Activated CD4-positive, alpha-beta T cell treated with anti-CD3 and anti-CD28 coated beads for 36 hours (primary cell): ENCODE measurements at regions of chr11 and their contacts with region 1.

Region 1: GRCh38 chr11:128522055-128522942 is 65.1 kb downstream of the ETS1 start:
- DNase-seq: peak; percentile 95
- ATAC-seq: peak; percentile 70
- H3K4me3 Mint-ChIP-seq: peak overlapping the region; percentile 96
- H3K27ac Mint-ChIP-seq: peak overlapping the region; percentile 99
- H3K4me1 Mint-ChIP-seq: peaks cover 42% of the 10 kb centered on the region
- H3K27me3 Mint-ChIP-seq: no peaks in the 10 kb centered on the region

Region 2: DNA sequence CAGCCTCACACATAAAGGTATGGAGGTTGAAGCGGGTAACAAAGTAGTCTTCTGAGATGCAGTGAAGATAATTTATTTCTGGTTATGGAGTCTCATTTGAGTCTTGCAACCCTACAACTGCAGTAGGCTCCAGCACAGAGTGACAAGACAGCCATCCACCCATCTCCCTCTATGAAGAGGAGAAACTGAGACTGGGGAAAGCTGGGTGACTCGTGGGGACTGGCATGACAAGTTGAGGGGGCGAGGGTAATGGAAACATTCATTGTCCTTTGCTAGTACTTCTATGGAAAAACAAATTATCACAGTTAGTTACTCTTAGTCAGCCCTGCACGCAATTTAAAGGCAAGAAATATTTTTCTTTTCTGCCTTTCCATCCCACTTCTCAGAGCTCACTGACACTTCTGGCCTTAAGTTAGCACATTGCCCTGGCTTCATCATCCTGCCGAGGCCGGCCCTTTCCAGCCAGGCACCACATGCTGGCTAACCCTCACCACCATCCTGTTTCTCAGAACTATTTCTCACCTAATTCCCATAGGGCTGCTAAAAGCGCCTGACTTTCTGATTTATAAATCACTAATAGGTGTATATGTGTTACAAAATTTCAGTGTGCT is 296.1 kb before region 1 on chr11:
- CTCF ChIA-PET with region 1: no interaction called
- POLR2A ChIA-PET with region 1: no interaction called
- intact Hi-C with region 1: loop called in 1 of 2 experiments (anchors 5 kb)
- DNase-seq: peak; percentile 62
- ATAC-seq: peak; percentile 54
- H3K4me3 Mint-ChIP-seq: no peak overlapping the region
- H3K27ac Mint-ChIP-seq: peak overlapping the region; percentile 55
- H3K4me1 Mint-ChIP-seq: peaks cover 52% of the 10 kb centered on the region
- H3K27me3 Mint-ChIP-seq: no peaks in the 10 kb centered on the region

Region 3: DNA sequence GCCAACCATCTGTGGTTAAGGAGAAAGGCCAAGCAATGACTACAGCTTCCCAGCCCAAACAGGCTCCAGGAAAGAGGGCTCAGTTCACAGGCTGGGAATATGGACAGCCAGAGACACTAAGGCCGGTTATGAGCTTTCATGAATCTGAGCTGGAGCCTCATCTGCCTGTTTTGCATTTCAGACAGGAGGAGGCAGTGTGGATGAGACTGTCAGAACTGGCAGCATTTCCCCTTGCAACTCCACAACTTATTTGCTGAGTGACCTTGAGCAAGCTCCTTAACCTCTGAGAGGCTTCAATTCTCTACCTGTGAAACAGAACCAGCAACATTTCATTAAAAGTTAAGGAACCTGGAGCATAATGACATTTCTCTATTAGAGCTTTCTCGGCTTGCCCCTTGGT is 198.9 kb before region 1 on chr11:
- CTCF ChIA-PET with region 1: interaction called, 3 read pairs
- POLR2A ChIA-PET with region 1: interaction called, 5 read pairs
- intact Hi-C with region 1: loop called in 1 of 2 experiments (anchors 1 kb)
- DNase-seq: peak; percentile 67
- ATAC-seq: peak; percentile 8
- H3K4me3 Mint-ChIP-seq: peak overlapping the region; percentile 62
- H3K27ac Mint-ChIP-seq: peak overlapping the region; percentile 98
- H3K4me1 Mint-ChIP-seq: peaks cover 91% of the 10 kb centered on the region
- H3K27me3 Mint-ChIP-seq: no peaks in the 10 kb centered on the region

Region 4: DNA sequence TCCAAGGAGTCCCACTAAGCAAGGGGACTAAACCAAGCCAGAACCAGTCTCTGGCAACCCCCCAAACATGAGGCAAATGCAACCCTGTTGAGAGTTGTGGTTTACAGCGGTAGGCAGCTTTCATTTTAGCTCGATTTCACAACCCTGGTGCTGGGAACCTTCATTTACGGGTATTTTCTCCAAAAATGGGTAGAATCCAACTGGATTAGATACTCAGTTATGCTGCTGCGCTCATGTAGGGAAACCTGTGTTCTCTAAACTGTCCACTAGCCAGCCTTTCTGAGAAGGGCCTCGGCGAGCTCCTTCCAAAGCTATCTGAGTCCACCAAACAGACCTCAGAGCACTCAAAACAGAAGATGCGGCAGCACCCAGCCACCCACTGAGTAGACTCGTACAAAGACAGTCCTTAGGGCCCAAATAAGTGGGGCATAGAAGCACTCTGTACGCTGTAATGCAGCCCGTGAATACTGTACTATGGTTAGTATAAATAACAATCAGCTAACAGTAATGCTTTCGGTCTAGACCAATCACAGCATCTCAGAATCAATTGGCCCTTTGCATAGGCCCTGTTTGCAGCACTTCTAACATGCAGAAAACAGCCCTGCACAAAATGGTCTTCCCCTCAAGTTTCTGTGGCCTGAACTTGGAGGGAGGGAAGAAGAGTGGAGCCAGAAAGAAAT is 39.6 kb before region 1 on chr11:
- CTCF ChIA-PET with region 1: interaction called, 6 read pairs
- POLR2A ChIA-PET with region 1: interaction called, 7 read pairs
- intact Hi-C with region 1: loop called in 1 of 2 experiments (anchors 2 kb)
- DNase-seq: peak; percentile 75
- ATAC-seq: peak; percentile 71
- H3K4me3 Mint-ChIP-seq: peak overlapping the region; percentile 63
- H3K27ac Mint-ChIP-seq: peak overlapping the region; percentile 98
- H3K4me1 Mint-ChIP-seq: peaks cover 96% of the 10 kb centered on the region
- H3K27me3 Mint-ChIP-seq: no peaks in the 10 kb centered on the region

Region 5: DNA sequence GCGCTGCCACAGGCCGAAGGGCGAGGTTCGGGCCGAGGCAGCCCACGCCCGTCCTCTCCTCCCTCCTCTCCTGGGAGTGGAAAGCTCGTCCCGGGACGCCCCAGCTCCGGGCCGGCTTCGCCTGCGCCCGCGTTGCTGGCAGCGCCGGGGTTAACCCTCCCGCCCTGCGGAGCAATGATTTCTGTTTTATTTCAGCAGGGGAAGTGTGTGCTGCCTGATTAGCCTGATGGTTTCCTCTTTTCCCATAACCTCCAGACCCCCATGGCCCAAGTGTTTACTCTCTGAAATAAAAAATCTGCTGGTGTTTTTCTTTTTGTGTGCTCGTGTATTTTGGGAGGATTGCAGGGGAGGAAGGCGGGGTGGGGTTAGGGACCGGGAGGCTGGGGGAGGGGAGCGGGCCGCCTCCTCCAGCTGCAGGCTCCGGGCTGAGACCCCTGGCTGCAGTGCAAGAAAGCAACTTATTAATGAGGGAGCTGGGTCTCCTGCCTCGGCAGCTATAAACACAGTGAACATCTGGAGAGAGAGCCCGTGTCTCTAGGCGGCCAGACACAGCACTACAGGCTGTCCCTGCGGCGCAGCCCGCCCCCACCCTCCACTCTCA is 26.5 kb after region 1 on chr11:
- CTCF ChIA-PET with region 1: interaction called, 8 read pairs
- POLR2A ChIA-PET with region 1: interaction called, 10 read pairs
- intact Hi-C with region 1: loop called (anchors 1 kb)
- DNase-seq: peak; percentile 51
- ATAC-seq: no peak
- H3K4me3 Mint-ChIP-seq: peak overlapping the region; percentile 67
- H3K27ac Mint-ChIP-seq: peak overlapping the region; percentile 86
- H3K4me1 Mint-ChIP-seq: peaks cover 91% of the 10 kb centered on the region
- H3K27me3 Mint-ChIP-seq: no peaks in the 10 kb centered on the region

Region 6: GRCh38 chr11:128695539-128696221 is 173.4 kb after region 1 on chr11:
- CTCF ChIA-PET with region 1: no interaction called
- POLR2A ChIA-PET with region 1: no interaction called
- intact Hi-C with region 1: loop called in 1 of 2 experiments (anchors 5 kb)
- DNase-seq: peak; percentile 49
- ATAC-seq: peak; percentile 24
- H3K4me3 Mint-ChIP-seq: peak overlapping the region; percentile 90
- H3K27ac Mint-ChIP-seq: peak overlapping the region; percentile 94
- H3K4me1 Mint-ChIP-seq: peaks cover 58% of the 10 kb centered on the region
- H3K27me3 Mint-ChIP-seq: peaks cover 9% of the 10 kb centered on the region